ENCODE measurements at regions of chr11 and their contacts with region 1.

Region 1: GRCh38 chr11:12281571-12282478 is 95.5 kb upstream of the PARVA start:
- DNase-seq: peak; percentile 92

Region 2: GRCh38 chr11:11931461-11932055 is 350.3 kb before region 1 on chr11:
- intact Hi-C with region 1: loop called (anchors 5 kb)
- DNase-seq: no peak

Region 3: GRCh38 chr11:12235947-12236743 is 45.7 kb before region 1 on chr11:
- intact Hi-C with region 1: loop called (anchors 5 kb)
- DNase-seq: no peak

Measured in cardiac septum (tissue), 1 donor.